HEK293T (cell line): ENCODE measurements at regions of chr4 and their contacts with region 1.

Region 1: GRCh38 chr4:76179398-76180318 is 31.5 kb upstream of the NUP54 start:
- DNase-seq: peak; percentile 79

Region 2: DNA sequence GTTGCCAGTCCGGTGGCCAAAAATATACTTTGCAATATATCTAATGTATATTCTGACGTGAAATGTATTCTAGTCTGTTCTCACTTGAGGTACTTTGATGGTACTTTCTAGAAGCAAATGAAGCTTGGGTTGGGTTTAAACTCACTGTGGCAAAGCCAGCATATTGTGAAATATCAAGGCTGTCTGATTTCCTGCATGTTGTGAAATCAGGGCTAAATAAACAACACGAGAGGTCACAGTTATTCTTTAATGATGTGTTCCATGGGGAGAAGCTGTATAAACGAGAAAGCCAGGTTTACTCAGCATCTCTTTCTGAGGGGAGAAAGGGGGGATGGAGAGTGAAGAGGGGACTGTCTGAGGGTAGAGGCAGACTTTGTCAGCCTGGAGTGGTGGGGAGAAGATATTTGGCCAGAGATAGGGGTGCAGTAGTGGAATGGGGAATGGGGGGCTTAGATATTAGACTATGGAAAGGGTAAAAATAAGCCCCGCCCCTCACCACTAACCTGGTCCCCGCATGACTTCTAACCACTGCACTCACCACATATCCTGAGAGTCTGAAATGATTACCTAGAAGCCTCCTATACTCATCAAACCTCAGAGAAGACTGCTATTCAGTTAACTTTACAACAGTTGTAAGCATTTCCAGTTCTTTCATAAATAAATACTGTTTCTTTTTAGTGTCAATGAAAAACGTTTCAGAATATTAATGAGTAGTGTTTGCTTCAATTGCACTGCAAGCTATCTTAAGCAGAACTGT is 39.8 kb after region 1 on chr4:
- CTCF ChIA-PET with region 1: no interaction called
- POLR2A ChIA-PET with region 1: no interaction called
- DNase-seq: no peak

Region 3: GRCh38 chr4:76305971-76306881 is 126.6 kb after region 1 on chr4 and contains the start of gene STBD1:
- CTCF ChIA-PET with region 1: interaction called, 10 read pairs
- POLR2A ChIA-PET with region 1: interaction called, 5 read pairs
- DNase-seq: peak; percentile 74

Region 4: DNA sequence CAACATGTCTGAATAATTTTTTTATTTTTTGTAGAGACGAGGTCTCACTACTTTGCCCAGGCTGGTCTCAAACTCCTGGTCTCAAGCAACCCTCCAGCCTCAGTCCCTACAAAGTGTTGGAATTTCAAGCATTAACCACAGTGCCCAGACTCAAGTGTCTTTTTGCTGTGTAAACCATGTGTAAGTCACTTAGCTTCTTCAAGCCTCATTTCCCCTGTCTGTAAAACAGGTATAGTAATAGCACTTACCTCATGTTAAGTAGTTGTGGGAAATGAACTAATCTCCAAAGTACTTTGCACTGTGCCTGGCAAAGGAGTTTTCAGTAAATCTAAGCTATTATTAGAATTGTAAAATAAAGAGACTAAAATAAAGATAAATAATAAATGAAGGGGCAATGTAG is 162.5 kb after region 1 on chr4:
- CTCF ChIA-PET with region 1: no interaction called
- POLR2A ChIA-PET with region 1: no interaction called
- DNase-seq: no peak